Colonic mucosa (tissue), 4 donors: ENCODE measurements at regions of chr9 and their contacts with region 1.

Region 1: GRCh38 chr9:90162819-90163218 is 479.8 kb downstream of the DIRAS2 start:
- DNase-seq: peak; percentile 53
- H3K4me3 ChIP-seq: no peak overlapping the region
- H3K27ac ChIP-seq: no peak overlapping the region
- H3K4me1 ChIP-seq: no peaks in the 10 kb centered on the region
- H3K27me3 ChIP-seq: no peaks in the 10 kb centered on the region
- CTCF ChIP-seq: no peak

Region 2: GRCh38 chr9:89721176-89721700 is 441.6 kb before region 1 on chr9:
- intact Hi-C with region 1: no loop called
- DNase-seq: no peak
- H3K4me3 ChIP-seq: no peak overlapping the region
- H3K27ac ChIP-seq: no peak overlapping the region
- H3K4me1 ChIP-seq: no peaks in the 10 kb centered on the region
- H3K27me3 ChIP-seq: no peaks in the 10 kb centered on the region
- CTCF ChIP-seq: no peak

Region 3: DNA sequence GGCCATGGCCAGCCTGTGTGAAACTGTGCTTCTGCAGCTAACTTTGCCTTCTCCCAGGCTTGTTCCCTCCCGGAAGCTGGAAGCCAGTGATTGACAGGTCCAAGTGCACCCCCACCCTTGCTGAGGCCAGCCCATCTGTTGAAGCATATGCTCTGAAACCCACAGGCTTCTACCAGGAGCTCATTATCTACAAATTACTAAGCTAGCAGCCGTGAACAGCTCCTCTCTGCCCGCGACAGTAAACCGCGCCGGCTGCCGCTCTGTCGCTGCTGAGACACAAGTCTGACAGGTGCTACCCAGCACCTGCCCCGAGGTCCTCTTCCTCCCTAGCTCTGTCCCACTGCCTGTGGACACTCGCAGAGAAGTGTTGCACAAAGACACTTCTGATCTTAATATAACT is 67.1 kb before region 1 on chr9:
- intact Hi-C with region 1: no loop called
- DNase-seq: no peak
- H3K4me3 ChIP-seq: no peak overlapping the region
- H3K27ac ChIP-seq: no peak overlapping the region
- H3K4me1 ChIP-seq: no peaks in the 10 kb centered on the region
- H3K27me3 ChIP-seq: no peaks in the 10 kb centered on the region
- CTCF ChIP-seq: no peak

Region 4: GRCh38 chr9:90201766-90202165 is 38.9 kb after region 1 on chr9:
- intact Hi-C with region 1: loop called (anchors 5 kb)
- DNase-seq: no peak
- H3K4me3 ChIP-seq: no peak overlapping the region
- H3K27ac ChIP-seq: no peak overlapping the region
- H3K4me1 ChIP-seq: no peaks in the 10 kb centered on the region
- H3K27me3 ChIP-seq: no peaks in the 10 kb centered on the region
- CTCF ChIP-seq: no peak